Activated CD4-positive, alpha-beta memory T cell treated with anti-CD3 and anti-CD28 coated beads for 36 hours (primary cell): ENCODE measurements at regions of chr17 and their contacts with region 1.

Region 1: GRCh38 chr17:40474419-40475002 is 26.9 kb downstream of the TNS4 start:
- DNase-seq: no peak
- H3K4me3 Mint-ChIP-seq: no peak overlapping the region
- H3K27ac Mint-ChIP-seq: peak overlapping the region; percentile 24
- H3K4me1 Mint-ChIP-seq: peaks cover 19% of the 10 kb centered on the region
- H3K27me3 Mint-ChIP-seq: no peaks in the 10 kb centered on the region

Region 2: DNA sequence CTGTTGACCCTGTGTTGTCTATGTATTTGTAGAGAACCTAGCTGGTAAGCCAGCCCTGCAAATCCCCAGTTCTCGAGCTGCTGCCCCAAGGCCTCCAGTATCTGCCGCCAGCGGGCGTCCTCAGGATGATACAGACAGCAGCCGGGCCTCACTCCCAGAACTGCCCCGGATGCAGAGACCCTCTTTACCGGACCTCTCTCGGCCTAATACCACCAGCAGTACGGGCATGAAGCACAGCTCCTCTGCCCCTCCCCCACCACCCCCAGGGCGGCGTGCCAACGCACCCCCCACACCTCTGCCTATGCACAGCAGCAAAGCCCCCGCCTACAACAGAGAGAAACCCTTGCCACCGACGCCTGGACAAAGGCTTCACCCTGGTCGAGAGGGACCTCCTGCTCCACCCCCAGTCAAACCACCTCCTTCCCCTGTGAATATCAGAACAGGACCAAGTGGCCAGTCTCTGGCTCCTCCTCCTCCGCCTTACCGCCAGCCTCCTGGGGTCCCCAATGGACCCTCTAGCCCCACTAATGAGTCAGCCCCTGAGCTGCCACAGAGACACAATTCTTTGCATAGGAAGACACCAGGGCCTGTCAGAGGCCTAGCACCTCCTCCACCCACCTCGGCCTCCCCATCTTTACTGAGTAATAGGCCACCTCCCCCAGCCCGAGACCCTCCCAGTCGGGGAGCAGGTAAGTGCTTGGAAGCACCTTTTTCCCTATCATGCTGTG is 209.9 kb before region 1 on chr17:
- CTCF ChIA-PET with region 1: no interaction called
- POLR2A ChIA-PET with region 1: no interaction called
- intact Hi-C with region 1: no loop called
- DNase-seq: no peak
- H3K4me3 Mint-ChIP-seq: no peak overlapping the region
- H3K27ac Mint-ChIP-seq: no peak overlapping the region
- H3K4me1 Mint-ChIP-seq: peaks cover 10% of the 10 kb centered on the region
- H3K27me3 Mint-ChIP-seq: no peaks in the 10 kb centered on the region

Region 3: GRCh38 chr17:40410082-40410481 is 64.4 kb before region 1 on chr17:
- CTCF ChIA-PET with region 1: interaction called, 12 read pairs
- POLR2A ChIA-PET with region 1: no interaction called
- intact Hi-C with region 1: no loop called
- DNase-seq: no peak
- H3K4me3 Mint-ChIP-seq: no peak overlapping the region
- H3K27ac Mint-ChIP-seq: no peak overlapping the region
- H3K4me1 Mint-ChIP-seq: no peaks in the 10 kb centered on the region
- H3K27me3 Mint-ChIP-seq: no peaks in the 10 kb centered on the region

Region 4: DNA sequence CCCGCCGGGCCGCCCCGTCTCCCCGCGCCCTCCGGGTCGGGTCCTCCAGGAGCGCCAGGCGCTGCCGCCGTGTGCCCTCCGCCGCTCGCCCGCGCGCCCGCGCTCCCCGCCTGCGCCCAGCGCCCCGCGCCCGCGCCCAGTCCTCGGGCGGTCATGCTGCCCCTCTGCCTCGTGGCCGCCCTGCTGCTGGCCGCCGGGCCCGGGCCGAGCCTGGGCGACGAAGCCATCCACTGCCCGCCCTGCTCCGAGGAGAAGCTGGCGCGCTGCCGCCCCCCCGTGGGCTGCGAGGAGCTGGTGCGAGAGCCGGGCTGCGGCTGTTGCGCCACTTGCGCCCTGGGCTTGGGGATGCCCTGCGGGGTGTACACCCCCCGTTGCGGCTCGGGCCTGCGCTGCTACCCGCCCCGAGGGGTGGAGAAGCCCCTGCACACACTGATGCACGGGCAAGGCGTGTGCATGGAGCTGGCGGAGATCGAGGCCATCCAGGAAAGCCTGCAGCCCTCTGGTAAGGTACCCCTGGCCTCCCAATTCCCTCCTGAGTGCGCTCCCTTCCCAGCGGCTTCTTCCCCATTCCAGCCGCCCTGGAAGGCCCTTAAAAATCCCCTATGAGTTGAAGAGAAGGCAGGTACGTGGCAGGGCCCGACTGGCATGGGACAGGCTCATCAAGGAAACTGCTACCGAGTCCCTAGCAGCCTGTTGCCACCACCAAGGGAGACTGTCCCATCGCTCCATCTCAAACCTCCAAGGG is 30.8 kb before region 1 on chr17:
- CTCF ChIA-PET with region 1: interaction called, 13 read pairs
- POLR2A ChIA-PET with region 1: no interaction called
- intact Hi-C with region 1: no loop called
- DNase-seq: peak; percentile 76
- H3K4me3 Mint-ChIP-seq: peak overlapping the region; percentile 65
- H3K27ac Mint-ChIP-seq: peak overlapping the region; percentile 82
- H3K4me1 Mint-ChIP-seq: peaks cover 41% of the 10 kb centered on the region
- H3K27me3 Mint-ChIP-seq: peaks cover 1% of the 10 kb centered on the region

Region 5: GRCh38 chr17:40464392-40464855 is 10.1 kb before region 1 on chr17:
- CTCF ChIA-PET with region 1: interaction called, 16 read pairs
- POLR2A ChIA-PET with region 1: no interaction called
- intact Hi-C with region 1: no loop called
- DNase-seq: no peak
- H3K4me3 Mint-ChIP-seq: no peak overlapping the region
- H3K27ac Mint-ChIP-seq: no peak overlapping the region
- H3K4me1 Mint-ChIP-seq: no peaks in the 10 kb centered on the region
- H3K27me3 Mint-ChIP-seq: no peaks in the 10 kb centered on the region

Region 6: DNA sequence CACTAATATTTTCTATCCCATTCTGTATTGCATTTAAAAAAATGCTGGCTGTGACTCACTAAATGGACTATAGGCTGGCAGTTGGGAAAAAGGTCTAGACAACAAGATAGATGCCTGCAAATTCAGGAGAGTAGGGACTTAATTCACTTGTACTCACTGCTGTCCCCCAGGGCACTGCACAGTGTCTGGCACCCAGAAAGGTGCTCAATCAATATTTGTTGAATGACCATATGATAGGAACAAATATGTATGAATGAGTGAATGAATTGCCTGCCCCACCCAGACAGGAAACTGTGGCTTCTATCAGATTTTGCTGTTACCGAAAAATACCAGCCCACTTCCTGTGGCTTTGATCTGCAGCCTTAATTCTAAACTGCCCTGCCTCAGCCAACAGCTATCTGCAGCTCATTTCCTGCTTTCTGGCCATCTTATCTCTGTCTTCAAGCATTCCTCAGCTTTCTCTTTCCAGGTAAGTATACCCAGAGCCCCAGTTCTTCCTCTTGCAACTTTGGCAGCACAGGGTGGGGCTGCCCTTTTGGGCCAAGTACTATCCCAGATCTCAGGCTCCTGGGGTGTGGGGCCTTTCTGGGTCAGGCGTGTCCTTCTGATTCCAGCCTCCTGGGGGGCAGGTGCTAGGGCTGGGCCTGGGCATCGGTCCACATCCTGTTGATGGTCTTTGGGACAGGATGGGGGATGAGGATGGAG is 42.2 kb after region 1 on chr17:
- CTCF ChIA-PET with region 1: interaction called, 11 read pairs
- POLR2A ChIA-PET with region 1: no interaction called
- intact Hi-C with region 1: no loop called
- DNase-seq: peak; percentile 83
- H3K4me3 Mint-ChIP-seq: peak overlapping the region; percentile 82
- H3K27ac Mint-ChIP-seq: peak overlapping the region; percentile 85
- H3K4me1 Mint-ChIP-seq: peaks cover 60% of the 10 kb centered on the region
- H3K27me3 Mint-ChIP-seq: no peaks in the 10 kb centered on the region